ENCODE measurements at regions of chr1 and their contacts with region 1.

Region 1: GRCh38 chr1:161177112-161177935 is at the start of gene B4GALT3:
- DNase-seq: peak; percentile 91 to 95
- ATAC-seq: peak; percentile 97 to 99 (median 98)
- H3K4me3 ChIP-seq: peak within 1 kb of the TSS; percentile 77
- H3K27ac ChIP-seq: peak within 1 kb of the TSS; percentile 91
- H3K4me1 ChIP-seq: peaks cover 22% of the 10 kb centered on the region
- H3K27me3 ChIP-seq: no peaks in the 10 kb centered on the region
- CTCF ChIP-seq: peak; percentile 18
- total RNA-seq, gene B4GALT3: 16.3 to 32.8 (median 28.9) TPM

Region 2: GRCh38 chr1:161192476-161193465 is 15.4 kb after region 1 on chr1:
- intact Hi-C with region 1: loop called in 1 of 2 experiments (anchors 1 kb)
- DNase-seq: peak; percentile 57 to 61
- ATAC-seq: peak; percentile 64 to 85 (median 64)
- H3K4me3 ChIP-seq: no peak overlapping the region
- H3K27ac ChIP-seq: peak overlapping the region; percentile 15
- H3K4me1 ChIP-seq: peaks cover 4% of the 10 kb centered on the region
- H3K27me3 ChIP-seq: no peaks in the 10 kb centered on the region
- CTCF ChIP-seq: peak; percentile 85